ENCODE measurements at regions of chr7 and their contacts with region 1.

Region 1: GRCh38 chr7:142782922-142783900 is 12.4 kb downstream of the PRSS2 start:
- DNase-seq: peak; percentile 73 to 82 (median 78)
- H3K4me3 ChIP-seq: peak overlapping the region in 1 of 2 donors; percentile 49
- H3K4me3 Mint-ChIP-seq: peak overlapping the region; percentile 81 to 90 (median 86)
- H3K27ac ChIP-seq: peak overlapping the region; percentile 21
- H3K27ac Mint-ChIP-seq: peak overlapping the region; percentile 92 to 100 (median 98)
- H3K4me1 ChIP-seq: peaks cover 17% of the 10 kb centered on the region
- H3K4me1 Mint-ChIP-seq: peaks cover 6 to 17% (median 7%) of the 10 kb centered on the region in 4 donors
- H3K27me3 ChIP-seq: no peaks in the 10 kb centered on the region
- H3K27me3 Mint-ChIP-seq: no peaks in the 10 kb centered on the region

Region 2: DNA sequence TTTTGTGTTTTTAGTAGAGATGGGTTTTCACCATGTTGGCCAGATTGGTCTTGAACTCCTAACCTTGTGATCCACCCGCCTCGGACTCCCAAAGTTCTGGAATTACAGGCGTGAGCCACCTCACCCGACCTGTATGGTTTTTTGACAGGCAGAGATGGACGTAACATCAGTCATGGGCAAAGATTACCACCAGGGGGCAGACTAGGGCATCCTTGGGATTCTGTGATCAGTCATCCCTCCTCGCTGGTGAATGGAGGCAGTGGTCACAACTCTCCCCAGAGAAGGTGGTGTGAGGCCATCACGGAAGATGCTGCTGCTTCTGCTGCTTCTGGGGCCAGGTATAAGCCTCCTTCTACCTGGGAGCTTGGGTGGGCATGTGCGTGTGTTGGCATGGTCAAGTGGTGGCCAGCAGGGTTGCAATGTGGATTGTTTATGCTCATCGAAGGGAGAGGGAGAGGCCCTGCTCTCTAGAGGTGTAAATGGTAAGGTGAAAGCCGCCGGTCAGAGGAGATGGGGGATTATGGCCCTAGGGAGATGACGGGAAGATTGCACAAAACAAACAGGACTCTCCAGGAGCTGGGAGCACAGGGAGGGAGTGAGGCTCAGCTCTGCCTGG is 156.7 kb before region 1 on chr7:
- CTCF ChIA-PET with region 1: interaction called, 50 read pairs
- POLR2A ChIA-PET with region 1: interaction called, 29 read pairs
- intact Hi-C with region 1: no loop called
- DNase-seq: peak; percentile 55 to 67 (median 60)
- H3K4me3 ChIP-seq: no peak overlapping the region
- H3K4me3 Mint-ChIP-seq: peak overlapping the region; percentile 75 to 92 (median 89)
- H3K27ac ChIP-seq: peak overlapping the region; percentile 43
- H3K27ac Mint-ChIP-seq: peak overlapping the region; percentile 75 to 95 (median 88)
- H3K4me1 ChIP-seq: no peaks in the 10 kb centered on the region
- H3K4me1 Mint-ChIP-seq: peaks cover 0 to 5% (median 3%) of the 10 kb centered on the region in 4 donors
- H3K27me3 ChIP-seq: no peaks in the 10 kb centered on the region
- H3K27me3 Mint-ChIP-seq: no peaks in the 10 kb centered on the region

Region 3: GRCh38 chr7:142632291-142633134 is 150.7 kb before region 1 on chr7:
- CTCF ChIA-PET with region 1: interaction called, 50 read pairs
- POLR2A ChIA-PET with region 1: interaction called, 34 read pairs
- intact Hi-C with region 1: loop called (anchors 1 kb)
- DNase-seq: peak; percentile 47 to 68 (median 67)
- H3K4me3 ChIP-seq: no peak overlapping the region
- H3K4me3 Mint-ChIP-seq: peak overlapping the region in 4 of 8 donors; percentile 15 to 51 (median 34)
- H3K27ac ChIP-seq: no peak overlapping the region
- H3K27ac Mint-ChIP-seq: peak overlapping the region in 4 of 7 donors; percentile 35 to 82 (median 72)
- H3K4me1 ChIP-seq: peaks cover 3% of the 10 kb centered on the region
- H3K4me1 Mint-ChIP-seq: peaks cover 3 to 15% (median 8%) of the 10 kb centered on the region in 4 donors
- H3K27me3 ChIP-seq: no peaks in the 10 kb centered on the region
- H3K27me3 Mint-ChIP-seq: peaks cover 1% of the 10 kb centered on the region in 2 donors

Region 4: DNA sequence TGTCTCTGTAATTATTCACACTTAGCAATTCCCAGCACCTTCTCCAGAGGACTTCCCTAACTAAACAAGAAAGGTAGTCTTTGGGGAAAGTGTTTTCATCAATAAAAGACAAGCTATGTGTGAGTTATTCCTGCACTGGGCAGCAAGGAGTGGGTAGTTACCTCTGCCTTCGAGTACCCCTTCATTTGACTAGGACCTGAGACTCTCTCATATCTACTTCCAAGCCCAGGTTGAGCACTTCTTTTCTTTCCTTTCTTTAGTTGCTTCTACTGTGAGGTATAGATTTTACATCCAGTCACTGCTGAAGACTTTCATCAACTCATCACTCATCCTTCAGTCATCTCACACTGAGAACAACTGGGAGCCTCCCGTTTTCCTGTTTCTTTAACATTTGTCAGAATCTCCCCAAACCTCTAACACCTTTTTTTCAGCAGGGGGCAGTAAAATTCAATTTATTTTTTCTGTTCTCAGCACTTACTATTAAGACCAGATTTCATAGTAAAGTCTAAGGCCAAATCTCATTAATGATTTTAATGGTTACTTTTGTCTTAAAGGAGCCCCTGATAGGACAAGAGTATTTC is 114.0 kb before region 1 on chr7:
- CTCF ChIA-PET with region 1: interaction called, 46 read pairs
- POLR2A ChIA-PET with region 1: interaction called, 12 read pairs
- intact Hi-C with region 1: loop called (anchors 1 kb)
- DNase-seq: peak in 4 of 5 donors; percentile 19 to 43 (median 30)
- H3K4me3 ChIP-seq: no peak overlapping the region
- H3K4me3 Mint-ChIP-seq: peak overlapping the region in 4 of 8 donors; percentile 0 to 67 (median 26)
- H3K27ac ChIP-seq: no peak overlapping the region
- H3K27ac Mint-ChIP-seq: peak overlapping the region in 5 of 7 donors; percentile 39 to 86 (median 70)
- H3K4me1 ChIP-seq: peaks cover 25% of the 10 kb centered on the region
- H3K4me1 Mint-ChIP-seq: peaks cover 19 to 30% (median 25%) of the 10 kb centered on the region in 4 donors
- H3K27me3 ChIP-seq: no peaks in the 10 kb centered on the region
- H3K27me3 Mint-ChIP-seq: no peaks in the 10 kb centered on the region

Region 5: DNA sequence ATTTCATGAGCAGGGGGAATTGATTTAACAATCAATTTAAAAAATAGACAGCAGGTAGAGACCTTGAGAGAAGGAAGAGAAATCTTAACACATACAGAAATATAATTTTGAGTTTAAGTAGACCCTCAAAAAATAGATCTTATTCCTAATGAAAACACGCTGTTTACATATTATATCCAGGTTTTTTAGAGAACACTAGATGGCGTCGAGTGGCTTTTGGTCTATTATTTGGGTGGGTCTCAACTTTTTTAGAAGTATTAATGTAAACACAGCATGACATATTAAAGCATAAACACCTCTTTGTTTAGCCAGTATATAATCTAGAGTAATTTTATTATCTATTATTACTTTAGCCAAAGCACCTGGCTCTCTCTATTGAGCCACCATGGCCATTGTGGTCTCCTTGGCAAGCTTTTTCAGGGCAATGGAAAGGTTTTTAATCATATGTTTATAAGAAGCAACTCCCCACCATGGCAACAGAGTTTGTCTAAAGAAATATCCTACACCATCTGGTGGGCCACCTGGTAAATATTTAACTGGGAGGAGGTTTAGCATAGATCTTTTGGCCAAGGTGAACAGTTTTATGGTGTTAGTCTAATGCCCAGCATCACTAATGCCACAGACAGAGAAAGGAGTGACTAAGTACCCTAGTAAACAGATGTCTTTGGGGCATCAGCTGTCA is 93.6 kb before region 1 on chr7:
- CTCF ChIA-PET with region 1: interaction called, 19 read pairs
- POLR2A ChIA-PET with region 1: interaction called, 7 read pairs
- intact Hi-C with region 1: loop called (anchors 1 kb)
- DNase-seq: no peak
- H3K4me3 ChIP-seq: no peak overlapping the region
- H3K4me3 Mint-ChIP-seq: no peak overlapping the region
- H3K27ac ChIP-seq: no peak overlapping the region
- H3K27ac Mint-ChIP-seq: peak overlapping the region in 3 of 7 donors; percentile 24 to 89 (median 77)
- H3K4me1 ChIP-seq: peaks cover 22% of the 10 kb centered on the region
- H3K4me1 Mint-ChIP-seq: peaks cover 16 to 40% (median 26%) of the 10 kb centered on the region in 4 donors
- H3K27me3 ChIP-seq: no peaks in the 10 kb centered on the region
- H3K27me3 Mint-ChIP-seq: no peaks in the 10 kb centered on the region

Region 6: GRCh38 chr7:142711746-142712619 is 71.2 kb before region 1 on chr7:
- CTCF ChIA-PET with region 1: interaction called, 83 read pairs
- POLR2A ChIA-PET with region 1: interaction called, 71 read pairs
- intact Hi-C with region 1: loop called (anchors 1 kb)
- DNase-seq: peak in 3 of 5 donors; percentile 19 to 45 (median 26)
- H3K4me3 ChIP-seq: peak overlapping the region in 1 of 2 donors; percentile 53
- H3K4me3 Mint-ChIP-seq: peak overlapping the region; percentile 87 to 94 (median 89)
- H3K27ac ChIP-seq: peak overlapping the region; percentile 35
- H3K27ac Mint-ChIP-seq: peak overlapping the region; percentile 85 to 95 (median 93)
- H3K4me1 ChIP-seq: peaks cover 78% of the 10 kb centered on the region
- H3K4me1 Mint-ChIP-seq: peaks cover 32 to 80% (median 62%) of the 10 kb centered on the region in 4 donors
- H3K27me3 ChIP-seq: no peaks in the 10 kb centered on the region
- H3K27me3 Mint-ChIP-seq: no peaks in the 10 kb centered on the region

Region 7: GRCh38 chr7:142745091-142745635 is 38.0 kb before region 1 on chr7:
- CTCF ChIA-PET with region 1: no interaction called
- POLR2A ChIA-PET with region 1: no interaction called
- intact Hi-C with region 1: no loop called
- DNase-seq: no peak
- H3K4me3 ChIP-seq: no peak overlapping the region
- H3K4me3 Mint-ChIP-seq: no peak overlapping the region
- H3K27ac ChIP-seq: no peak overlapping the region
- H3K27ac Mint-ChIP-seq: no peak overlapping the region
- H3K4me1 ChIP-seq: no peaks in the 10 kb centered on the region
- H3K4me1 Mint-ChIP-seq: no peaks in the 10 kb centered on the region
- H3K27me3 ChIP-seq: no peaks in the 10 kb centered on the region
- H3K27me3 Mint-ChIP-seq: no peaks in the 10 kb centered on the region

Region 8: GRCh38 chr7:142866361-142867058 is 83.3 kb after region 1 on chr7:
- CTCF ChIA-PET with region 1: interaction called, 10 read pairs
- POLR2A ChIA-PET with region 1: no interaction called
- intact Hi-C with region 1: no loop called
- DNase-seq: peak in 1 of 5 donors; percentile 19
- H3K4me3 ChIP-seq: no peak overlapping the region
- H3K4me3 Mint-ChIP-seq: no peak overlapping the region
- H3K27ac ChIP-seq: no peak overlapping the region
- H3K27ac Mint-ChIP-seq: no peak overlapping the region
- H3K4me1 ChIP-seq: no peaks in the 10 kb centered on the region
- H3K4me1 Mint-ChIP-seq: peaks cover 0 to 2% (median 0%) of the 10 kb centered on the region in 4 donors
- H3K27me3 ChIP-seq: no peaks in the 10 kb centered on the region
- H3K27me3 Mint-ChIP-seq: no peaks in the 10 kb centered on the region

Measured in CD4-positive, alpha-beta memory T cell (primary cell).